Breast epithelium (tissue), 4 donors: ENCODE measurements at regions of chr15 and their contacts with region 1.

Region 1: DNA sequence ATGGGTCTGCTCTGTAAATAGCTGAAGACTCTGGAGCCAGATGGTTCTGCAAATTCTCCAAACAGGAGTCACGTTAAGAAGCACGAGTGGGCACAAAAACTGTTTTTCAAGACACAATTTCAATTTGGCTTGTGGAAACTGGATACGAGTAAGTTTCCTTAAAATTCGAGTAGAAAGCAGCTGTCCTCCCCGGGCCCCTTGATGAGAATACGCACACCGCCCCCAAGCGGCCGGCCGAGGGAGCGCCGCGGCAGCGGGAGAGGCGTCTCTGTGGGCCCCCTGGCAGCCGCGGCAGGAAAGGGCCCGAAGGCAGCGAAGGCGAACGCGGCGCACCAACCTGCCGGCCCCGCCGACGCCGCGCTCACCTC is 778 bp upstream of the THBS1 start:
- DNase-seq: peak; percentile 93
- H3K4me3 ChIP-seq: peak overlapping the region; percentile 55 to 88 (median 71)
- H3K27ac ChIP-seq: peak overlapping the region; percentile 96
- H3K4me1 ChIP-seq: peaks cover 0 to 3% of the 10 kb centered on the region in 2 donors
- H3K27me3 ChIP-seq: no peaks in the 10 kb centered on the region
- CTCF ChIP-seq: peak; percentile 76 to 99 (median 89)
- POLR2A ChIP-seq: no peak

Region 2: GRCh38 chr15:39171944-39172368 is 408.1 kb before region 1 on chr15:
- intact Hi-C with region 1: loop called (anchors 5 kb)
- DNase-seq: peak in 1 of 2 donors; percentile 69
- H3K4me3 ChIP-seq: no peak overlapping the region
- H3K27ac ChIP-seq: peak overlapping the region; percentile 65 to 82
- H3K4me1 ChIP-seq: peaks cover 5 to 6% of the 10 kb centered on the region in 2 donors
- H3K27me3 ChIP-seq: no peaks in the 10 kb centered on the region
- CTCF ChIP-seq: peak; percentile 14 to 67 (median 53)
- POLR2A ChIP-seq: no peak

Region 3: GRCh38 chr15:39543651-39544050 is 36.5 kb before region 1 on chr15:
- intact Hi-C with region 1: no loop called
- DNase-seq: no peak
- H3K4me3 ChIP-seq: no peak overlapping the region
- H3K27ac ChIP-seq: no peak overlapping the region
- H3K4me1 ChIP-seq: peaks cover 0 to 5% of the 10 kb centered on the region in 2 donors
- H3K27me3 ChIP-seq: no peaks in the 10 kb centered on the region
- CTCF ChIP-seq: no peak
- POLR2A ChIP-seq: no peak

Region 4: DNA sequence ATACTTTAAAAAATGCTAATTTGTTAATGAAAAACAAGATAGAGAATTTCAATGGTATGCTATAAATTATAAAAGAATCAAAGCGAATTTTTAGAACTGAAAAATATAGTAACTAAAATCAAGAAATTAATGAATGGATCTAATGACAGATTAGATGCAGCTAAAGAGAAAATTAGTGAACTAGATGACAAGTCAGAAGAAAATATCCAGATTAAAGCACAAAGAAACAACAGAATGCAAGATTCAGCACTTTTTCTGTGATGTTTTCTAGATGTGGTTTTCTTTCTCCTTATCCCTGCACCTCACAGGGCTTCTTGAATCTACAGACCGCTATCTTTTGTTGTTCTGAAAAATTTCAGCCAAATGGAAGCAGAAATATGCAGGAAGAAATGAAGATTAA is 1481.6 kb after region 1 on chr15:
- intact Hi-C with region 1: no loop called
- DNase-seq: no peak
- H3K4me3 ChIP-seq: no peak overlapping the region
- H3K27ac ChIP-seq: no peak overlapping the region
- H3K4me1 ChIP-seq: no peaks in the 10 kb centered on the region
- H3K27me3 ChIP-seq: no peaks in the 10 kb centered on the region
- CTCF ChIP-seq: no peak
- POLR2A ChIP-seq: no peak